ENCODE measurements at regions of chr3 and their contacts with region 1.

Region 1: GRCh38 chr3:20511863-20512505 is 326.0 kb upstream of the SGO1 start:
- DNase-seq: no peak
- ATAC-seq: peak; percentile 80 to 86 (median 82)
- H3K4me3 ChIP-seq: no peak overlapping the region
- H3K27ac ChIP-seq: no peak overlapping the region
- H3K4me1 ChIP-seq: no peaks in the 10 kb centered on the region
- H3K27me3 ChIP-seq: no peaks in the 10 kb centered on the region
- CTCF ChIP-seq: peak; percentile 75

Region 2: DNA sequence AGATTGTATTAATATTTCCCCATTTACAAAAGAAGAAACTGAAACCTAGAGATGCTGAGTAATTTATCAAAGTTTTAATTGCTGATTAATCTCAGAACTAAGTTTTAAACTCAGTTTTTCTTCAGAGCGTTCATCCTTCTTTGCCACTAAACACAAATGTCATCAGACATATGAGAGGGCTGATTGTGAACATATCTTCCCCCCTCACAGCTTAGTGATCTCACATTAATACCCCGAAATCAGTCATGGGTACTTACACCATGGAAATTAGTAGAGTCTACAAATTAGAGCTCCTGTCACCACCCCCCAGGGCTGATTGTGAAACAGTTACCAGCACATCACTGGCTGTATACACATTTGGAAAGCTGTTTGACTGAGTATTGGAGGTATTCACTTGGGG is 136.7 kb before region 1 on chr3:
- intact Hi-C with region 1: no loop called
- DNase-seq: no peak
- ATAC-seq: no peak
- H3K4me3 ChIP-seq: no peak overlapping the region
- H3K27ac ChIP-seq: no peak overlapping the region
- H3K4me1 ChIP-seq: no peaks in the 10 kb centered on the region
- H3K27me3 ChIP-seq: no peaks in the 10 kb centered on the region
- CTCF ChIP-seq: no peak

Region 3: DNA sequence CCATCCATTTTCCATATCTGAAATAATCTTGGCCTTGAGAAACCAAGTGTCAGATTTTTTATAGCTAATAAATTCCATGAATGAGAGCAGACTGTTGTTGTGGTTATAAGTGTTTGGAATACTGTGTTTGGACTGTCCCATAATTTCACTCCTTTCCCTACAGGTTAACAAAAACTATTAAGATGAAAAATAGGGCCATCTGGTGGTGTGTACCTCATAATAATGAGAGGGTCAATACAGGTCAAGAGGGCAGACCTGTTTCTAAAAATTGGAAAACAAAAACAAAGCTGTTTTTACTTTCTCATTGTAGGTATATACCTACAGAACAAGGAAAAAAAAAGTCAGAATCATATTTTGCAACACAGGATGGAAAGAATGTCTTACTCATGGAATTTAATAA is 227.8 kb after region 1 on chr3:
- intact Hi-C with region 1: loop called (anchors 2 to 10 kb)
- DNase-seq: no peak
- ATAC-seq: peak in 2 of 4 donors; percentile 39 to 64
- H3K4me3 ChIP-seq: no peak overlapping the region
- H3K27ac ChIP-seq: no peak overlapping the region
- H3K4me1 ChIP-seq: no peaks in the 10 kb centered on the region
- H3K27me3 ChIP-seq: no peaks in the 10 kb centered on the region
- CTCF ChIP-seq: peak; percentile 32

Region 4: DNA sequence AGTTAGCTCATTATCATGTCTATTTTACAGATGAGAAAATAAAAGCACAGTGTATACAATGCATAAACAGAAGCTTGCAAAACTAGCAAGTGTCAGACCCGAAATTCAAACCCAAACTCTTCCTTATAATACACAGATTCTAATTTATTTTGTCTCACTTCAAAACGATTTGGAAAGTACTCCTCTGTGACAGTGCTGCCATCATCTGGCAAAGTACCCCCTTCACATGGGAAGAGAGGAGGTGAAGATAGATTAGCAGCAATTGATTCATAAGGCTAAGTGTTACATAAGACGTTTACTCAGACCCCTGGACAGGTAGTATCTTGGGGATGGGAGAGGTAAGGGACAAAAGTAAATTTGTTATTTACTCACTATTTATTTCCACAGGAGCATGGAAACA is 418.1 kb after region 1 on chr3:
- intact Hi-C with region 1: loop called in 1 of 2 experiments (anchors 5 kb)
- DNase-seq: no peak
- ATAC-seq: no peak
- H3K4me3 ChIP-seq: no peak overlapping the region
- H3K27ac ChIP-seq: no peak overlapping the region
- H3K4me1 ChIP-seq: no peaks in the 10 kb centered on the region
- H3K27me3 ChIP-seq: no peaks in the 10 kb centered on the region
- CTCF ChIP-seq: no peak

Region 5: GRCh38 chr3:21894459-21895340 is 1382.7 kb after region 1 on chr3:
- intact Hi-C with region 1: loop called (anchors 10 kb)
- DNase-seq: no peak
- ATAC-seq: peak in 3 of 4 donors; percentile 11 to 65 (median 41)
- H3K4me3 ChIP-seq: no peak overlapping the region
- H3K27ac ChIP-seq: no peak overlapping the region
- H3K4me1 ChIP-seq: peaks cover 4% of the 10 kb centered on the region
- H3K27me3 ChIP-seq: no peaks in the 10 kb centered on the region
- CTCF ChIP-seq: peak; percentile 67

Region 6: DNA sequence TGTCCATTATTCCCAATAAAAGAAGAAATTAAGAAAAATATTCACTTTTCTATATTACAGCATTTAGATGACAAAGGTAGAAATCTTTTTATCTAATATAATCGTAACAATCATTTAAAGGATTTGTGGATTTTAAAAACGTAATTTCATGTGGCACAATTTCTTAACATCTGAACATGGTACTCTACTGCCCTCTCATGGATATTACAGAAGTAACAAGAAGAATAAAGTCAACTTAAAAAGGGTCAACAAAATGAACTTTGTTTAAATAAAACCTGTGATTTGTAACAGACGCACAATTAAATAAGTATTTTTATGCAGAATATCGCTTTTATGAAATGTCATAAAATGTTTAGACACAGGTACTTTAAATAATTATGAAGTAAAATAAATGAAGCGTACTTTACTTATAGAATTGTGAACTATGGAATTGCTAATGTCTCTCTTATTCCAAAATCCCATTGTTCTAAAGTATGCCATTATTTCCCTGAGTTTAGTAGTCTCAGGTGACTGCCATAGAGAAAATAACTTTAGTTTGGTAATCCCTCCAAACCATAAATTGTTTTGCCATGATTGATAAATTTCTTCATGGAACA is 1605.9 kb after region 1 on chr3:
- intact Hi-C with region 1: loop called in 1 of 2 experiments (anchors 5 kb)
- DNase-seq: no peak
- ATAC-seq: peak in 1 of 4 donors; percentile 63
- H3K4me3 ChIP-seq: no peak overlapping the region
- H3K27ac ChIP-seq: no peak overlapping the region
- H3K4me1 ChIP-seq: peaks cover 4% of the 10 kb centered on the region
- H3K27me3 ChIP-seq: no peaks in the 10 kb centered on the region
- CTCF ChIP-seq: peak; percentile 77

Measured in psoas muscle (tissue), 8 donors.